G401 (cell line): ENCODE measurements at regions of chr11 and their contacts with region 1.

Region 1: GRCh38 chr11:4508886-4509285 is 26.4 kb downstream of the OR52K1 start:
- DNase-seq: no peak

Region 2: GRCh38 chr11:4464216-4465159 is 44.4 kb before region 1 on chr11:
- in situ Hi-C with region 1: loop called (anchors 5 kb)
- DNase-seq: no peak